Heart right ventricle (tissue), 16 donors: ENCODE measurements at regions of chr18 and their contacts with region 1.

Region 1: DNA sequence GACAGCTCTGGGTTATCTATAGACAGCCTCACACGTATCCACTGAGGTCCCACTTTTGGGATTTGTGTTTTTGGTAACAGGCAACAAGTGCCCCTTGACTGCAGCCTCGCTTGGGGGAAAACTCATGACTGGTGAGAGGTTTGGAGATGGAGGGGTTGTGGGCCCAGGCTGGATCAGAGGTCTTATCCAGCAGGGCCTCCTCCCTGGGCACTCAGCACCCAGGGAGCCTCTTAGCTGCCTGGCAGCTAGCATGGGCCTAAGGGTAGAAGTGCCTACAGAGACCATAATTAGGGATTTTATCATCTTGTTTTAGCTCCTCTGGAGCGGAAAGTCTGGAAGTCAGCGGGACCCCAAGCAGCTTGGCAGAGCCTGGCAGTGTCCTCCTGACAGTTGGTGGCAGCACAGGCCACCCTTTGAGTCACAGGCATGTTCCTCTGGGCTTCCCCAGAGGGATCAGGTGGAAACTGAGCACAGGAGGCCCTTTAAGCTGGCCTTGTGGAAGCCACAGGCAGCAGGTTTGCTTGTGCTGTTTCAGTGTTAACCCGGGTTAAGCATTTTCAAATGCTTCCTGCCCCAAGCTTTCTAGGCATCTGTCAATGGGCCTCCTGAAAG is 143.1 kb downstream of the KCTD1 start:
- DNase-seq: peak; percentile 33 to 41
- ATAC-seq: peak; percentile 65 to 90 (median 86)
- H3K4me3 ChIP-seq: no peak overlapping the region
- H3K27ac ChIP-seq: no peak overlapping the region
- H3K4me1 ChIP-seq: no peaks in the 10 kb centered on the region
- H3K27me3 ChIP-seq: no peaks in the 10 kb centered on the region
- CTCF ChIP-seq: peak; percentile 14 to 69 (median 55)

Region 2: DNA sequence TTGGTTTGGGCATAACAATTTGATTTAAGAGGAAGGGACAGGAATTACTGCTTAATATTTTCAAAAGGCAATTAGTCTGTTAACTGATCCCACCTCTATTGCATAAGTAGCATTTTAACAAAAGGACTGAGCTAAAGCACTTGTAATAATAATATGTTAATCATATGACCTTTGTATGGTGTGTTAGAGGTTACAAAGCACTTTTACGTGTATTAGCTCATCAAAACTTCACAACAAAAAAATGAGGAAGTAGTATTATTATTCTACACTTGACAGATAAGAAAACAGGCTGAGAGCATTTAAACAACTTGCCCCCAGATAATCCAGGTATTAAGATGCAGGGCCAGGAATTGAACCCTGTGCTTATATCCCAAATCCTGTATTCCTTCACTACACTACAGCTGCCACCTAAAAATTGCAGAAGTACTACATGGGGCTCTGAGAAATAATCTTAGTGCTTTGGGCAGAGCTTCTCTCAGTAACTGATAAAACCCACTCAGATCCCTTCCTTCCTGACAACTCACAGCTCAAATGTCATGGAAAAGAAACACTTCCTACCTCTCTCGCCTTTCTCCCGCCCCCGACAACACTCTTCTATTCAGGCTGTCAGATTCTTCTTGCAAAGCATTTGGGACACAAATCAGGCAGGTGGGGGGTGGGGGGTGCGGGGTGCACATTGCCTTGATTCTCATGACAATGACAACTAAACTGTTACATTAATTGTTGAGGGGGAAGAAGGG is 163.8 kb after region 1 on chr18:
- intact Hi-C with region 1: loop called in 1 of 10 experiments (anchors 10 kb)
- DNase-seq: no peak
- ATAC-seq: no peak
- H3K4me3 ChIP-seq: no peak overlapping the region
- H3K27ac ChIP-seq: no peak overlapping the region
- H3K4me1 ChIP-seq: peaks cover 0 to 7% (median 0%) of the 10 kb centered on the region in 9 donors
- H3K27me3 ChIP-seq: peaks cover 0 to 5% (median 0%) of the 10 kb centered on the region in 7 donors
- CTCF ChIP-seq: no peak